ENCODE measurements at regions of chr12 and their contacts with region 1.

Region 1: DNA sequence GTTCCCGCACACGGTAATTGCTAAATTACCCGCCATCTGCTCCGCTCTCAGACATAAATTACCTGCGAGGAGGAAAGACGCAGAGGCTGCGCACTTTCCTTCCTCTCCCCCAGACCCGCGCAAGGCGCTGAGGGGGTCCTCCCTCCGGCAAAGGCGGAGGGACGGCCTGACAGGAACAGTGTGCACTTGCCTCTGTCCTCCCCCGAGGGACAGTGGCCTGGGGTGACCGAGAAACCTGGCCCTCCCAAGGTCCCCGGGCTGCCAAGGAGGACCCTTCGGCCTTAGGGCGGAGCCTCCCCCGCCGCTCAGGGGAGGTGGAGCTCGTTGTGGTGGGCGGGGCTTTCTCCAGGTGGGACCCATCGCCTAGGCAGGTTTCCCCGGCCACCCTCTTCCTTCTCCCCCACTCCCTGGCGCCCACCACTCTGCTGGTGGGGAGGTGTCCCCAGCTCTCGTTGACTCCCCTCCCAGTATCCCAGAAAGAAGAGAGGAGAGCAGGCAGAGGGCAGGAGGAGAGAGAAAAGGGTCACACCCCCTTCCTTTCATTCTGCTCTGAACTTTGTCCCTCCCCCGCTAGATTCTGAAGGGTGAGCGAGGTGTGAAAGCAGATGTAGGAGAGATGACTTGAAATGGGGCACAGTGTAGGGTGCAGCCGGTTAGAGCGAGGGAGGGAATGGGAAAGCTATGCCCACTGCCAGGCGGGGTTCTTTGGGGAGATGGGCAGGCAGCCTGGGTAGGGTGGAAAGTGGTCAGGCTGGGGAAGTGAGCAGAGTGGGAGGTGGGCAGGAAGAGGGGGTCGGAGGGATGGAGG is 11.4 kb upstream of the CALCOCO1 start:
- DNase-seq: peak; percentile 40
- ATAC-seq: no peak
- H3K4me3 Mint-ChIP-seq: no peak overlapping the region
- H3K27ac Mint-ChIP-seq: no peak overlapping the region
- H3K4me1 Mint-ChIP-seq: peaks cover 16% of the 10 kb centered on the region
- H3K27me3 Mint-ChIP-seq: peaks cover 57% of the 10 kb centered on the region

Region 2: DNA sequence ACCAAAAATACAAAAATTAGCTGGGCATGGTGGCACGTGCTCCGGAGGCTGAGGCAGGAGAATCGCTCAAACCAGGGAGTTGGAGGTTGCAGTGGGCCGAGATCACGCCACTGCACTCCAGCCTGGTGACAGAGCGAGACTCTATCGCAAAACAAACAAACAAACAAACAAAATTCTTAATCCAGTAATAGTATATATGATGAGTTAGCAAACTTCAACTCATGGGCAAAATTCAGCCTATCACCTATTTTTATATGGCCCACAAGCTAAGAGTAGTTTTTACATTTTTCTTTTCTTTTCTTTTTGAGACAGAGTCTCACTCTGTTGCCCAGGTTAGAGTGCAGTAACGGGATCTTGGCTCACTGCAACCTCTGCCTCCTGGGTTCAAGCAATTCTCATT is 127.3 kb before region 1 on chr12:
- CTCF ChIA-PET with region 1: no interaction called
- POLR2A ChIA-PET with region 1: no interaction called
- DNase-seq: no peak
- ATAC-seq: no peak
- H3K4me3 Mint-ChIP-seq: no peak overlapping the region
- H3K27ac Mint-ChIP-seq: no peak overlapping the region
- H3K4me1 Mint-ChIP-seq: peaks cover 16% of the 10 kb centered on the region
- H3K27me3 Mint-ChIP-seq: no peaks in the 10 kb centered on the region

Region 3: GRCh38 chr12:53686436-53686835 is 52.2 kb before region 1 on chr12:
- CTCF ChIA-PET with region 1: no interaction called
- POLR2A ChIA-PET with region 1: no interaction called
- DNase-seq: no peak
- ATAC-seq: no peak
- H3K4me3 Mint-ChIP-seq: no peak overlapping the region
- H3K27ac Mint-ChIP-seq: no peak overlapping the region
- H3K4me1 Mint-ChIP-seq: no peaks in the 10 kb centered on the region
- H3K27me3 Mint-ChIP-seq: peaks cover 24% of the 10 kb centered on the region

Region 4: DNA sequence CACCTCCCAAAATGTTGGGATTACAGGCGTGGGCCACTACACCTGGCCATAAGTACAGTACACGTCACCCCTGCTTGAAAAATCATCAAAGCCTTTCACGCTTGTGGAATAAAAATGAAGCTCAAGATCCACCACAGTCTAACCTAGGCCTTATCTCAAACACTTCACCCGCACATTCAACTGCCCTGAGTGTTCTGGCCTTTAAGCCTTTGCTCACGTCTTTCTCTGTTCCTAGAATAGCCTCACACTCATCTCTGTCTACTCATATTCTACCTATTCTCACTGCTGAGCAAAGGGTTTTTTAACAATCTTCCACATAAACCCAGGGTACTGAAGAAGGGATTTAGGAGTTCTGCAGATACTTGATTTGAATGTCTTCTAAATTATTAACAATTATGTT is 21.3 kb before region 1 on chr12:
- CTCF ChIA-PET with region 1: interaction called, 15 read pairs
- POLR2A ChIA-PET with region 1: interaction called, 10 read pairs
- DNase-seq: no peak
- ATAC-seq: no peak
- H3K4me3 Mint-ChIP-seq: no peak overlapping the region
- H3K27ac Mint-ChIP-seq: no peak overlapping the region
- H3K4me1 Mint-ChIP-seq: no peaks in the 10 kb centered on the region
- H3K27me3 Mint-ChIP-seq: no peaks in the 10 kb centered on the region

Measured in activated CD8-positive, alpha-beta T cell treated with anti-CD3 and anti-CD28 coated beads, Interleukin-2, amount 10 ng/mL, durations not matched to agents 7 days and 5 days (primary cell).